RWPE1 (cell line): ENCODE measurements at regions of chr17 and their contacts with region 1.

Region 1: DNA sequence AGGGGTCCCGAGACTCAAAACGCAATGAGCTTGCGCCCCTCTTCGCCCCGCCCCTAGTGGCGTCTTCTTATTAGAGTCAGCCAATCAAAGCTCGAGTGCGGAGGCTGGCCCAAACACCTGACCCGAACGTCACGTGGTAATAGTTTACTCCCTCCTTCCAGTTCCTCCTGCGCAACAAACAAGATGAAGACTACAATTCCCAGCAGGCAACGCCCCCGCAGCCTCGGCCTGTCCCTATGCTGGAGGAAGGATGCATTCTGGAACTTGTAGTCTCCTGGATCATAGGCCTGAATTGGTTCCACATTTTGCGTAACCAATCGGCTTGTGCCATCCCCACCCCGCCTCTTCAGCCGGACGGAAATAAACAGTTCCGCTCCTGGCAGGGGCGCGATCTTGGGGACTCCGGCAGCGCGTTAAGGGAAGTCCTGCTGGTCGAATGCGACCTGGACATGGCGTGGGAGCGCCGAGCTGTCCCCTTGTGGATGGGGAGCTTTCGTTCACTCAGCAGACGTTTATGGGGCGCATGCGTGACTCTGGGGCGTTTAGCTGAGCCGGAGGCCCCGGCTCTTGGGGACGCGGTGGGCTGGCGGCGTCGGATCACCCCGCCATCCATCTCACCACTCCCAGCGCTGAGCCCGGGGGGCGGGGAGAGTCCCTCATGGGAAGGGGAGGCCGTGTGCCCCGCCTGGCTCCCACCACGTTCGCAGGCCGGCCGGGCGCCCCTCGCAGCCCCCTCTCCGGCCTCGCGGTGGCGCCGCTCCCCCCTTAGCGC is at the start of gene WBP2:
- DNase-seq: peak; percentile 100
- H3K27ac ChIP-seq: peak within 1 kb of the TSS; percentile 92
- CTCF ChIP-seq: peak; percentile 78

Region 2: GRCh38 chr17:75845049-75845860 is 10.2 kb before region 1 on chr17:
- CTCF ChIA-PET with region 1: interaction called, 12 read pairs
- POLR2A ChIA-PET with region 1: interaction called, 11 read pairs
- DNase-seq: peak; percentile 70
- H3K27ac ChIP-seq: peak overlapping the region; percentile 92
- CTCF ChIP-seq: peak; percentile 86

Region 3: GRCh38 chr17:75876190-75876937 is 20.9 kb after region 1 on chr17:
- CTCF ChIA-PET with region 1: interaction called, 8 read pairs
- POLR2A ChIA-PET with region 1: interaction called, 10 read pairs
- DNase-seq: peak; percentile 54
- H3K27ac ChIP-seq: peak overlapping the region; percentile 98
- CTCF ChIP-seq: peak; percentile 36

Region 4: DNA sequence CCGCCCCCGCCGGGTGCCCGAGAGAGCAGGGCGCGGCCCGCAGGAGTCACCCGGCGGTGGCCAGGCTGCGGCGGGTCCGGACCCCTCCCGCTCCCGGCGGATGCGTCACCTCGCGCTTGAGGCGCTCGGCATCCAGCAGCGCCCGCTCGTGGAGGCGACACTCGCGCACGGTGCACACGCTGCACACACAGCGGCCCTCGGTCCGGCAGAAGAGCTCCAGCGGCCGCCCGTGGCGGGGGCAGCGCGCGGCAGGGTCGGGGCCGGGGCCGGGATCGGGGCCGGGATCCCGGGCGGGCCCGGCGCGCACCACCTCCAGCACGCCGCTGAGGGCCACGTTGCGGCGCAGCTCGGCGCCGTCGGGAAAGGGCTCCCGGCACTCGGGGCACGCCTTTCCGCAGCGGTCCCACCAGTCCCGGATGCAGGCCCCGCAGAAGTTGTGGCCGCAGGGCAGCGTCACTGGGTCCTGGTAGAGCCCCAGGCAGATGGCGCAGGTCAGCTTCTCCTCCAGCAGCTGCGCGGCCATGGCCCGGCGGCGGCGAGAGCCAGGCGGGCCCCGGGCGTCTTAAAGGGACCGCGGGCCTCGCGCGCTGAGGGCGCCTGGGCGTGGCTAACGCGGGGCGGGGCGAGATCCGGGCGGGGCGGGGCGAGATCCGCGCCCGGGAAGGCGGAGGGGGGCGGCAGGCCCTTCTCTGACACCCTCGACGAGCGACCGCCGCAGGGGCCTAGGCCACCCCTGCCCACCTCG is 41.1 kb after region 1 on chr17 and contains the start of gene TRIM65:
- CTCF ChIA-PET with region 1: interaction called, 14 read pairs
- POLR2A ChIA-PET with region 1: no interaction called
- DNase-seq: peak; percentile 67
- H3K27ac ChIP-seq: peak within 1 kb of the TSS; percentile 91
- CTCF ChIP-seq: peak; percentile 78